ENCODE measurements at regions of chr18 and their contacts with region 1.

Region 1: GRCh38 chr18:33706391-33706790 is 128.4 kb downstream of the ASXL3 start:
- DNase-seq: peak; percentile 11
- ATAC-seq: no peak
- H3K4me3 ChIP-seq: no peak overlapping the region
- H3K27ac ChIP-seq: no peak overlapping the region
- H3K4me1 ChIP-seq: no peaks in the 10 kb centered on the region
- H3K27me3 ChIP-seq: no peaks in the 10 kb centered on the region
- CTCF ChIP-seq: no peak
- POLR2A ChIP-seq: no peak
- RAD21 ChIP-seq: no peak

Region 2: DNA sequence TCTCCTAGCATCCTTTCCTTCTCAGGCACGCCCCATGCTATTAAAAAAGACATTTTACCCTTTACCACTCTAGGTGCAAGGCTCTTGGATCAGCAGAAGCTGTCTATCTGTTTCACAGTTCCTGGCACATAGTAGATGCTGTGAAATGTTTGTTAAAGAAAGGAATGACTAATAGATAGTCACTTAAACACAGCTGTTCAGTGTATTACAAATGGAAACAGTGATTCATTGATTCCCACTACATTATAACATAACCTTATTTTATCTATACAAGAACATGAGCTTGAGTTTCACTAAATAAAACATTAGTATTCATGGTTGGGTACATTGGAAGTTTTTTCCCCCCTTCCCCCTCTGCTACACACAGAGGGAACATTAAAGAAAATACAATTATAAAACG is 13.7 kb after region 1 on chr18:
- CTCF ChIA-PET with region 1: no interaction called
- POLR2A ChIA-PET with region 1: no interaction called
- dilution Hi-C with region 1: no loop called
- in situ Hi-C with region 1: no loop called
- intact Hi-C with region 1: loop called (anchors 2 kb)
- DNase-seq: peak; percentile 86
- ATAC-seq: peak; percentile 78
- H3K4me3 ChIP-seq: no peak overlapping the region
- H3K27ac ChIP-seq: peak overlapping the region; percentile 99; the same call in 1 of the 2 replicates
- H3K4me1 ChIP-seq: peaks cover 9% of the 10 kb centered on the region; the same call in 1 of the 2 replicates
- H3K27me3 ChIP-seq: no peaks in the 10 kb centered on the region
- CTCF ChIP-seq: no peak
- POLR2A ChIP-seq: no peak
- RAD21 ChIP-seq: no peak

Region 3: DNA sequence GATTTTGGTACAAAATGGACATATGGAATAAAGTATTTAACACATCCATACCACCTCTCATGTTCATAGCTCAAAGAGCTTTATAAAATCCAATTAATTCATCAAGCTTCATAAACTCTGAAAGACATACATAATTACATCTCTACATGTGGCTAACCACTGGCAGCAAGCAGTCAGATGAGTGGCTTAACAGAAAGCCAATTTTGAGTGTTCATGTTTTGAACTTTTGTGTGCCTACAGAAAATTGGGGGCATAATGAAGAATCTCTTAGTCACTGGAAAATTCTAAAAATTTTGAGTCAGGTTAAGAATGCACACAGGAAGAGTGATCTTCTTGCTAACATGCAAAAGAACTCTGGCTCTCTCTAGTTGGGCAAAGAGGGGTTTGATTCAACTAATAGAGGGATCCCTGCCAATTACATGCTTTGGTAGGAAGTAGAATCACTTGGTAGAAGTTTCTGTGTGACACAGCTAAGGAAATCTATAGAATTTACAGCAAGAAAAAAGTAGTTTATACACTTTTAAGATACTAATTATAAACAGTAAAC is 231.0 kb after region 1 on chr18:
- CTCF ChIA-PET with region 1: no interaction called
- POLR2A ChIA-PET with region 1: no interaction called
- dilution Hi-C with region 1: no loop called
- in situ Hi-C with region 1: no loop called
- intact Hi-C with region 1: no loop called
- DNase-seq: no peak
- ATAC-seq: no peak
- H3K4me3 ChIP-seq: no peak overlapping the region
- H3K27ac ChIP-seq: no peak overlapping the region
- H3K4me1 ChIP-seq: no peaks in the 10 kb centered on the region
- H3K27me3 ChIP-seq: no peaks in the 10 kb centered on the region
- CTCF ChIP-seq: no peak
- POLR2A ChIP-seq: no peak
- RAD21 ChIP-seq: no peak